CD4-positive, alpha-beta T cell (primary cell): ENCODE measurements at regions of chr6 and their contacts with region 1.

Region 1: GRCh38 chr6:2841264-2842138 is at the start of gene SERPINB1:
- DNase-seq: peak; percentile 53 to 90 (median 71)
- ATAC-seq: peak; percentile 76
- H3K4me3 ChIP-seq: peak within 1 kb of the TSS; percentile 72
- H3K4me3 Mint-ChIP-seq: peak within 1 kb of the TSS; percentile 87
- H3K27ac ChIP-seq: peak within 1 kb of the TSS; percentile 76
- H3K27ac Mint-ChIP-seq: peak within 1 kb of the TSS; percentile 86
- H3K4me1 ChIP-seq: peaks cover 43% of the 10 kb centered on the region
- H3K4me1 Mint-ChIP-seq: peaks cover 70% of the 10 kb centered on the region
- H3K27me3 ChIP-seq: no peaks in the 10 kb centered on the region
- H3K27me3 Mint-ChIP-seq: no peaks in the 10 kb centered on the region
- CTCF ChIP-seq: no peak
- total RNA-seq, gene SERPINB1: 58.3 to 58.4 TPM

Region 2: DNA sequence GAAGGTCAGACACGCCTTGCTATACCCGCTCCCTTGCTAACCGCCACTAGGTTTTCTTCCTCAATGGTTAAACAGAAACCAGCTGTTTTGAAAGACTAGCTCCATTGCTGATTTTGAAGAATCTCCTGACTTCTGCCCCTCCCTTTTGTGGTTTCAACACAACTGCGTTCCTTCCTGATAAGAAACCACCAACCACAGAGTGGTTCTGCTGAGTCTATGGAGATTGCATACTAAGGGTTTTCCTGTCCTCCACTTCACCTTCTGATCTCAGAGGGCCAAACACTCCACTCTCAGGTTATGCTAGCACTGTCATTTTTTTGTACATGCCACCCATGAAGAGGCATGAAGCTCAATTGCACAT is 298.7 kb before region 1 on chr6:
- CTCF ChIA-PET with region 1: no interaction called
- POLR2A ChIA-PET with region 1: no interaction called
- intact Hi-C with region 1: no loop called
- DNase-seq: peak in 6 of 14 experiments; percentile 8 to 82 (median 45)
- ATAC-seq: peak; percentile 76
- H3K4me3 ChIP-seq: no peak overlapping the region
- H3K4me3 Mint-ChIP-seq: peak overlapping the region; percentile 58
- H3K27ac ChIP-seq: no peak overlapping the region
- H3K27ac Mint-ChIP-seq: no peak overlapping the region
- H3K4me1 ChIP-seq: peaks cover 24% of the 10 kb centered on the region
- H3K4me1 Mint-ChIP-seq: peaks cover 28% of the 10 kb centered on the region
- H3K27me3 ChIP-seq: peaks cover 25 to 41% of the 10 kb centered on the region in 2 experiments
- H3K27me3 Mint-ChIP-seq: peaks cover 70% of the 10 kb centered on the region
- CTCF ChIP-seq: no peak

Region 3: DNA sequence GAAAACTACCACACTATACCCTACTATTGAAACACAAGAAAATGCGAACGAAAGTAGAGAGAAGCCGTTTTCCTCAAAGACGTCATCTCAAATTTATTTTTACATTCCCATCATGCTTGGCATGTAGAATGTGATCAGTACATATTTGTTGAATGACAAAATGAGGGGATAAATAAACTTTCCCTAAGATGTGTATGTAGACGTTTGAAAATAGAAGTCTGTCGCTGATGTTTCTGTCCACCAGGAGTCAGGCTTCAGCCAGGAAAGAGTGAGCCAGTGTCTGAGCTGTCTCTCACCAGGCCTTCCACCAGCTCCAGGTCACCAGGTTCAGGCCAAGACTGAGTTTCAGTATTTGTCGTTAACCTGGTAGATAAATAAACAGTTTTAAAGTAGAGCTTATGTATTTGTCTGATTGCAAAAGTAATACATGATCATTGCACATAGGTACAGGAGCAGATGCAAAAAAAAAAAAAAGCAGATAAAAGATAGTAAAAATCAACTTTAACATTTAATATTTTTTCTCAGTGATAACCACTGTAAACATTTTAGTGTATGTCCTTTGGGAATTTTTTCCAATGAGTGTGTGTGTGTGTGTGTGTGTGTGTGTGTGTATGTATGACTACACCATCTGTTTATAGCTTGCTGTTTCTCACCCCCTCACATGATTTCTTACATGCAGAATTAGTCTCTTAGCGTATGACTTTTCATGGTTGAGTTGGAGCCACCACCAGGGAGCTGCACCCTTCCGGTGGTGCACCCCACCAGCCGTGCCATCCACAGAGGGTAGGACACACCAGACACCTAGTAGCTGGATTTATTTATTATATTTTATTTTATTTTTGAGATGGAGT is 50.2 kb before region 1 on chr6:
- CTCF ChIA-PET with region 1: interaction called, 8 read pairs
- POLR2A ChIA-PET with region 1: interaction called, 24 read pairs
- intact Hi-C with region 1: loop called (anchors 1 to 5 kb)
- DNase-seq: peak; percentile 22 to 76 (median 42)
- ATAC-seq: peak; percentile 86
- H3K4me3 ChIP-seq: no peak overlapping the region
- H3K4me3 Mint-ChIP-seq: peak overlapping the region; percentile 49
- H3K27ac ChIP-seq: no peak overlapping the region
- H3K27ac Mint-ChIP-seq: peak overlapping the region; percentile 70
- H3K4me1 ChIP-seq: peaks cover 22% of the 10 kb centered on the region
- H3K4me1 Mint-ChIP-seq: peaks cover 37% of the 10 kb centered on the region
- H3K27me3 ChIP-seq: no peaks in the 10 kb centered on the region
- H3K27me3 Mint-ChIP-seq: no peaks in the 10 kb centered on the region
- CTCF ChIP-seq: peak; percentile 68

Region 4: GRCh38 chr6:2900821-2901644 is 59.5 kb after region 1 on chr6:
- CTCF ChIA-PET with region 1: interaction called, 11 read pairs
- POLR2A ChIA-PET with region 1: interaction called, 26 read pairs
- intact Hi-C with region 1: no loop called
- DNase-seq: peak in 2 of 14 experiments; percentile 6 to 26
- ATAC-seq: no peak
- H3K4me3 ChIP-seq: peak overlapping the region; percentile 95
- H3K4me3 Mint-ChIP-seq: peak overlapping the region; percentile 100
- H3K27ac ChIP-seq: peak overlapping the region; percentile 9 to 69
- H3K27ac Mint-ChIP-seq: peak overlapping the region; percentile 99
- H3K4me1 ChIP-seq: peaks cover 50% of the 10 kb centered on the region
- H3K4me1 Mint-ChIP-seq: peaks cover 63% of the 10 kb centered on the region
- H3K27me3 ChIP-seq: no peaks in the 10 kb centered on the region
- H3K27me3 Mint-ChIP-seq: no peaks in the 10 kb centered on the region
- CTCF ChIP-seq: no peak

Region 5: DNA sequence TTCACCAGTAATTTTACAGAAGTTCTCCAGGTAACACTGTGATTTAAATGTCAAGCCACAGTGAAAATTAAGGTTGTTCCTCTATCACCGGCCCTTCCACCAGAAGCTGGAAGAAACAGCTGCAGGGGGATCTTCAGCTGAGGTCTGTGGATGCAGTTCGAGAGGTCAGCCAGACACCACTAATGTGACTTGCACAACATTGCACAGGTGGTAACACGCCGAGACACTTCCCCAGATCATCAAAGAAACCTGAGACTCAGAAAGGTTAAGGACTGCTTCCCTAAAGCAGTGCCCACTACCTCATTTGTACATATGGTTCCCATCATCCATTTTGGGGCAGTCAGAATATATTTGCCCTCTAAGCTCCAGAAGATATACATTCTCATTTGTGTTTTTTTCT is 69.7 kb after region 1 on chr6:
- CTCF ChIA-PET with region 1: interaction called, 54 read pairs
- POLR2A ChIA-PET with region 1: interaction called, 33 read pairs
- intact Hi-C with region 1: loop called (anchors 1 kb)
- DNase-seq: no peak
- ATAC-seq: no peak
- H3K4me3 ChIP-seq: no peak overlapping the region
- H3K4me3 Mint-ChIP-seq: no peak overlapping the region
- H3K27ac ChIP-seq: no peak overlapping the region
- H3K27ac Mint-ChIP-seq: no peak overlapping the region
- H3K4me1 ChIP-seq: peaks cover 15% of the 10 kb centered on the region
- H3K4me1 Mint-ChIP-seq: peaks cover 25% of the 10 kb centered on the region
- H3K27me3 ChIP-seq: no peaks in the 10 kb centered on the region
- H3K27me3 Mint-ChIP-seq: no peaks in the 10 kb centered on the region
- CTCF ChIP-seq: no peak

Region 6: GRCh38 chr6:2931970-2932748 is 90.7 kb after region 1 on chr6:
- CTCF ChIA-PET with region 1: interaction called, 33 read pairs
- POLR2A ChIA-PET with region 1: interaction called, 13 read pairs
- intact Hi-C with region 1: loop called (anchors 1 kb)
- DNase-seq: peak; percentile 77 to 93 (median 86)
- ATAC-seq: peak; percentile 98
- H3K4me3 ChIP-seq: no peak overlapping the region
- H3K4me3 Mint-ChIP-seq: peak overlapping the region; percentile 0
- H3K27ac ChIP-seq: no peak overlapping the region
- H3K27ac Mint-ChIP-seq: no peak overlapping the region
- H3K4me1 ChIP-seq: peaks cover 16% of the 10 kb centered on the region
- H3K4me1 Mint-ChIP-seq: peaks cover 18% of the 10 kb centered on the region
- H3K27me3 ChIP-seq: no peaks in the 10 kb centered on the region
- H3K27me3 Mint-ChIP-seq: no peaks in the 10 kb centered on the region
- CTCF ChIP-seq: peak; percentile 96

Region 7: GRCh38 chr6:2940010-2940850 is 98.7 kb after region 1 on chr6:
- CTCF ChIA-PET with region 1: interaction called, 3 read pairs
- POLR2A ChIA-PET with region 1: interaction called, 38 read pairs
- intact Hi-C with region 1: no loop called
- DNase-seq: peak; percentile 56 to 92 (median 66)
- ATAC-seq: peak; percentile 73
- H3K4me3 ChIP-seq: peak overlapping the region; percentile 66
- H3K4me3 Mint-ChIP-seq: peak overlapping the region; percentile 85
- H3K27ac ChIP-seq: peak overlapping the region; percentile 55 to 86
- H3K27ac Mint-ChIP-seq: peak overlapping the region; percentile 90
- H3K4me1 ChIP-seq: peaks cover 69% of the 10 kb centered on the region
- H3K4me1 Mint-ChIP-seq: peaks cover 66% of the 10 kb centered on the region
- H3K27me3 ChIP-seq: no peaks in the 10 kb centered on the region
- H3K27me3 Mint-ChIP-seq: no peaks in the 10 kb centered on the region
- CTCF ChIP-seq: no peak

Region 8: GRCh38 chr6:3023663-3024483 is 182.4 kb after region 1 on chr6:
- CTCF ChIA-PET with region 1: no interaction called
- POLR2A ChIA-PET with region 1: interaction called, 11 read pairs
- intact Hi-C with region 1: no loop called
- DNase-seq: peak; percentile 58 to 93 (median 88)
- ATAC-seq: peak; percentile 82
- H3K4me3 ChIP-seq: peak overlapping the region; percentile 78
- H3K4me3 Mint-ChIP-seq: peak overlapping the region; percentile 86
- H3K27ac ChIP-seq: peak overlapping the region; percentile 40 to 76
- H3K27ac Mint-ChIP-seq: peak overlapping the region; percentile 77
- H3K4me1 ChIP-seq: peaks cover 68% of the 10 kb centered on the region
- H3K4me1 Mint-ChIP-seq: peaks cover 53% of the 10 kb centered on the region
- H3K27me3 ChIP-seq: no peaks in the 10 kb centered on the region
- H3K27me3 Mint-ChIP-seq: no peaks in the 10 kb centered on the region
- CTCF ChIP-seq: no peak